ENCODE measurements at regions of chr9 and their contacts with region 1.

Region 1: DNA sequence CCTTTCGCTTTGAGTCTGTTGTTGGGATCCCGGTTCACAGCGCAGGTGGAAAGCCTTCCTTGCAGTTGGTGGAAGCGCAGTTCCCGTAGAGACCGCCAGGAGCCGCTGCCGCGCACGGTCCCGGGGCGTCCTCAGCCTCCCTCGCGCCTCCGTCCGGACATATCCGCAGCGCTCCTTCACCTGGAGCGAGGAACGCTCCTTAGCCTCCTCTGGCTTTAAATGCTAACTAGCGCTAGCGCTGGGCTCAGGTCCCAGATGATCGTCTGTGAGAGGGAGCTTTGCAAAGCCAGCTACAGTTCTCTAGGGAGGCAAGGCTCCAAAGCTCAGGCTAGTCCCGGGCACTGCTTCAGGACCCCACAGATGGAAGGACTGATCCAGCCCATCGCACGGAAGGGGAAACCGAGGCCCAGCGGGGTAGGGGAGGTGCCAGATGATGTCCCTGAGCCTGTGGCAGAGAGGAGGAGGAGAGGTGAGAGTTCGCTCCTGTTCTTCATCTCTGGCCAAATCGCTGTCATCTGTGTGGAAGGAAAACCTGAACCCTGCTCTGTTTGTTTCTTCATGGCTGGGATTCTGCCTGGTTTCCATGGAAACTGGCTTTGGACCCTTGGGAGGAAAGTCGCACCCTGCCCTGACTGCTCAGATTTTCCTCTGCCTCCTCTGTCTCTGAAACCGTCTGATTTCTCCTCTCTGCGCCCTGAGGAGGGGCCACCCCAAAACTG is 31.4 kb downstream of the COL15A1 start:
- DNase-seq: peak; percentile 81 to 91
- ATAC-seq: peak; percentile 88 to 89 (median 88)
- H3K4me3 ChIP-seq: peak overlapping the region; percentile 52
- H3K27ac ChIP-seq: peak overlapping the region; percentile 36
- H3K4me1 ChIP-seq: peaks cover 27% of the 10 kb centered on the region
- H3K27me3 ChIP-seq: peaks cover 0 to 13% (median 0%) of the 10 kb centered on the region in 3 donors
- CTCF ChIP-seq: peak; percentile 97

Region 2: DNA sequence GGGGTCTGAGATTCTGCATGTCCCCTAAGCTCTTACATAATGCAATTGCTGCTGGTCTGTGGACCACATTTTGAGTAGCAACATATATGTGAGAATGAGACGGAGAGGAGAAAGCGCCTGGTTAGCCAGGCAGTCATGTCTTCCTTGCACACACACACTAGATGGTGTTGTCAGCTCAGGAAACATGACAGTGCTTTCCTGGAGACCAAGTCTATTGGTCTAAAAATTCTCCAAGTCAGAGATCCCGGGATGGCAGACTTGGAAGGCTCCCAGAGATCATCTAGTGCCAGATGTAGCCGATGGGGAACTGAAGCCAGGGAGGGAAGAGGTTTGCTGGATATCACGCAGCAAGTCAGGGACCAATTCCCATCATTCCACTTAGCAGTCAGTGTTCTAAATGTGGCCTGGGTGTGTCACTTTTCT is 114.3 kb before region 1 on chr9:
- intact Hi-C with region 1: loop called in 1 of 2 experiments (anchors 5 kb)
- DNase-seq: peak; percentile 46 to 70
- ATAC-seq: peak; percentile 48 to 64 (median 54)
- H3K4me3 ChIP-seq: no peak overlapping the region
- H3K27ac ChIP-seq: no peak overlapping the region
- H3K4me1 ChIP-seq: no peaks in the 10 kb centered on the region
- H3K27me3 ChIP-seq: peaks cover 0 to 4% (median 3%) of the 10 kb centered on the region in 3 donors
- CTCF ChIP-seq: peak; percentile 35